ENCODE measurements at regions of chr12 and their contacts with region 1.

Region 1: DNA sequence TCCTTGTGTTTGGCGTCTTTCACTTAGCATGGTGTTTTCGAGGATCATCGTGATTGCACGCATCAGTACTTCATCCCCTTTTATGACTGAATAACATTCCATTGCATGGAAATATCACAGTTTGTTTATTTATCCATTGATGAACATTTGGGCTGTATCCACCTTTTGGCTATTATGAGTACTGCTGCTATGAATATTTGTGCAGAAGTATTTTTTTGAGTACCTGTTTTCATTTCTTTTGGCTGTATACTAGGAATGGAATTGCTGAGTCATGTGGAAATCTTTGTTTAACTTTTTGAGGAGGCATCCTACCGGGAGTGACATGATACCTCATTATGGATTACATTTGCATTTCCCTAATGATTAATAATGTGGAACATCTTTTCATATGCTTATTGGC is 66.4 kb downstream of the WNK1 start:
- DNase-seq: no peak
- ATAC-seq: no peak
- H3K4me3 Mint-ChIP-seq: no peak overlapping the region
- H3K27ac Mint-ChIP-seq: no peak overlapping the region
- H3K4me1 Mint-ChIP-seq: peaks cover 53% of the 10 kb centered on the region
- H3K27me3 Mint-ChIP-seq: no peaks in the 10 kb centered on the region
- CTCF ChIP-seq: no peak

Region 2: GRCh38 chr12:273382-273781 is 545.4 kb before region 1 on chr12:
- CTCF ChIA-PET with region 1: no interaction called
- POLR2A ChIA-PET with region 1: no interaction called
- intact Hi-C with region 1: no loop called
- DNase-seq: no peak
- ATAC-seq: peak; percentile 30
- H3K4me3 Mint-ChIP-seq: no peak overlapping the region
- H3K27ac Mint-ChIP-seq: no peak overlapping the region
- H3K4me1 Mint-ChIP-seq: peaks cover 3% of the 10 kb centered on the region
- H3K27me3 Mint-ChIP-seq: no peaks in the 10 kb centered on the region
- CTCF ChIP-seq: no peak

Region 3: DNA sequence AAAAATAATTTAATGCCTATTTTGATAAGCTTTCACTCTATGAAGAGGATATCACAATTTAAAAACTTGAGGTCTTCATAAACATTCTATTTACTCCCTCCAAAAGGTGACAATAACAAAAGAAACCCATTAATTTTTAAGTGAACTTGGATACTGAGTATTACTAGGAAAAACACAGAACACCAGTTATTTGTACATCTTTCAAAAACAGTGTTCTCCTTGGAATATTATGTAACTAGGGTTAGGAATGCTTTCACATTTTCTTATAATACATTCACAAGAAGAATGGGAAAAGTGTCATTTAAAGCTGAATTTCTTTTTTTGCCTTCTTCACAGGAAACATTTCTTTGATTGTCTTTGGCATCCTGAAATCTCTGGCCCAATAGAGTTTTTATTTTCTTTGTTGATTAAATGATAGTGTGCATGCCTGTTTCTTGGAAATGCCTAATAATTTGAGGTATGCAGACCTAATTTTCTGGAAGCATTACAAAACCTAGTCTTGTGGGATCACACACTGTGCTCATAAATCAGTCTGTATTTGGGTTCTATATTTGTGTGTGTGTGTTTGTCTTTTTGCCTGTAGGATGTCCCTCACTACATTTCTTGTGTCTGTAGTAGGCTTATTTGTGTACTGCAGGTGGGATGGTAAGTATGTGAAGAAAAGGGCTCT is 10.1 kb after region 1 on chr12:
- CTCF ChIA-PET with region 1: interaction called, 32 read pairs
- POLR2A ChIA-PET with region 1: interaction called, 3 read pairs
- intact Hi-C with region 1: no loop called
- DNase-seq: no peak
- ATAC-seq: no peak
- H3K4me3 Mint-ChIP-seq: no peak overlapping the region
- H3K27ac Mint-ChIP-seq: peak overlapping the region; percentile 38
- H3K4me1 Mint-ChIP-seq: peaks cover 38% of the 10 kb centered on the region
- H3K27me3 Mint-ChIP-seq: no peaks in the 10 kb centered on the region
- CTCF ChIP-seq: no peak

Region 4: GRCh38 chr12:848173-848865 is 29.6 kb after region 1 on chr12:
- CTCF ChIA-PET with region 1: interaction called, 21 read pairs
- POLR2A ChIA-PET with region 1: no interaction called
- intact Hi-C with region 1: no loop called
- DNase-seq: no peak
- ATAC-seq: peak; percentile 68
- H3K4me3 Mint-ChIP-seq: peak overlapping the region; percentile 2
- H3K27ac Mint-ChIP-seq: peak overlapping the region; percentile 86
- H3K4me1 Mint-ChIP-seq: peaks cover 62% of the 10 kb centered on the region
- H3K27me3 Mint-ChIP-seq: no peaks in the 10 kb centered on the region
- CTCF ChIP-seq: no peak

Region 5: DNA sequence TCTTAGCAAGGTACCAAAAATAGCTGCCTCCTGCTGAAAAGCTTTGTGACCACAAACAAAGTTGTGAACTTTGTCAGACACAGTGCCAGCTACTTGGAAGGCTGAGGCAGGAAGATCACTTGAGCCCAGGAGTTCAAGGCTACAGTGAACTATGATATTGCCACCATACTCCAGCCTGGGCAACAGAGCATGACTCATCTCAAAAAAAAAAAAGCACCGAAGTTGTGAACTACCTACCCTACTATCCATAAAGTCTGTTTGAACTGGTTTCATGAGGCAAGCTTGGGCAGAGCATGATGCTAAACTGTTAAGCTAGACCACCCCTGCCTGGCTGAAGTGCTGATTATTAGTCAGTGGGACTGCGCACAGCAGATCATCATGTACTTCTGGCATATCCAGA is 55.2 kb after region 1 on chr12:
- CTCF ChIA-PET with region 1: interaction called, 10 read pairs
- POLR2A ChIA-PET with region 1: no interaction called
- intact Hi-C with region 1: no loop called
- DNase-seq: peak; percentile 31
- ATAC-seq: peak; percentile 88
- H3K4me3 Mint-ChIP-seq: no peak overlapping the region
- H3K27ac Mint-ChIP-seq: peak overlapping the region; percentile 75
- H3K4me1 Mint-ChIP-seq: peaks cover 17% of the 10 kb centered on the region
- H3K27me3 Mint-ChIP-seq: no peaks in the 10 kb centered on the region
- CTCF ChIP-seq: no peak